ENCODE measurements at regions of chr2 and their contacts with region 1.

Region 1: GRCh38 chr2:239193925-239194677 is 206.7 kb downstream of the HDAC4 start:
- DNase-seq: peak; percentile 42
- ATAC-seq: peak; percentile 55; the same call in 1 of the 2 replicates
- H3K4me3 Mint-ChIP-seq: no peak overlapping the region
- H3K27ac Mint-ChIP-seq: no peak overlapping the region
- H3K4me1 Mint-ChIP-seq: no peaks in the 10 kb centered on the region
- H3K27me3 Mint-ChIP-seq: no peaks in the 10 kb centered on the region
- CTCF ChIP-seq: no peak

Region 2: GRCh38 chr2:239143858-239144718 is 50.0 kb before region 1 on chr2:
- CTCF ChIA-PET with region 1: interaction called, 14 read pairs
- POLR2A ChIA-PET with region 1: no interaction called
- DNase-seq: peak; percentile 53
- ATAC-seq: peak; percentile 87
- H3K4me3 Mint-ChIP-seq: no peak overlapping the region
- H3K27ac Mint-ChIP-seq: no peak overlapping the region
- H3K4me1 Mint-ChIP-seq: no peaks in the 10 kb centered on the region
- H3K27me3 Mint-ChIP-seq: no peaks in the 10 kb centered on the region
- CTCF ChIP-seq: peak; percentile 55

Region 3: DNA sequence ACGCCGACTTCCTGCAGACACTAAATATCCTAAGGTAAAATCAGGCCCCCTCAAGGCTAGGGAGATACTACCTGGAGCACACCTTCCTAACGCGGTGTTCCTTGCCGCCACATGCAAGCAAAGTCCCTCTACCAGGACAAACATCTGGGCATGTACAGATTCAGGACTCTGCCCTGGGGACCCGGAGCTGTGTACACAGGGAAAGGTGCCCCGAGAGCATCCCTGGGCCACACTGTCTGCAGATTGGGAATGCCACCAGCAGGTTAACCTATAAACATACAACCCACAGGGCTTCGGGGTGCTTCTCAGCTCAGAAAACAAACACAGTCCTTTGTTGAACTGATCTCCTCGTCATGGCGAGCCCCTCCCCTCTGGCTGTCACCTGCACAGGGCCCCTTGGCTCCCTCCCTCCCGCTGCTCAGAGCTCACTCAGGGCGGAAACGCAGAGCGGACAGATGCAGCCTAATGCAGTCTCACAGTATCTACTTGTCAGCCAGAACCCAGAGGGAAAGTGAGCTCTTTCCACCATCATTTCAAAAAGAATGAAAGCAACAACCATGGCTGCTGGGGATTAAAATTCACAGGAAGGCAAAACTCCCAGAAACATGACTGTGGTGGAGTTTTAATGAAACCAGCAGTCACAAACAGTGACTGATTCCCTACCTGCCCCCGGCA is 12.1 kb before region 1 on chr2:
- CTCF ChIA-PET with region 1: interaction called, 14 read pairs
- POLR2A ChIA-PET with region 1: no interaction called
- DNase-seq: no peak
- ATAC-seq: peak; percentile 60
- H3K4me3 Mint-ChIP-seq: no peak overlapping the region
- H3K27ac Mint-ChIP-seq: no peak overlapping the region
- H3K4me1 Mint-ChIP-seq: peaks cover 10% of the 10 kb centered on the region; the same call in 1 of the 2 replicates
- H3K27me3 Mint-ChIP-seq: no peaks in the 10 kb centered on the region
- CTCF ChIP-seq: no peak

Region 4: GRCh38 chr2:239208466-239209180 is 14.5 kb after region 1 on chr2:
- CTCF ChIA-PET with region 1: interaction called, 20 read pairs
- POLR2A ChIA-PET with region 1: no interaction called
- DNase-seq: no peak
- ATAC-seq: no peak
- H3K4me3 Mint-ChIP-seq: no peak overlapping the region
- H3K27ac Mint-ChIP-seq: peak overlapping the region; percentile 63; the same call in 1 of the 2 replicates
- H3K4me1 Mint-ChIP-seq: peaks cover 73% of the 10 kb centered on the region
- H3K27me3 Mint-ChIP-seq: no peaks in the 10 kb centered on the region
- CTCF ChIP-seq: no peak

Region 5: GRCh38 chr2:239412905-239413603 is 219.0 kb after region 1 on chr2:
- CTCF ChIA-PET with region 1: no interaction called
- POLR2A ChIA-PET with region 1: interaction called, 11 read pairs
- DNase-seq: no peak
- ATAC-seq: no peak
- H3K4me3 Mint-ChIP-seq: no peak overlapping the region
- H3K27ac Mint-ChIP-seq: no peak overlapping the region
- H3K4me1 Mint-ChIP-seq: no peaks in the 10 kb centered on the region
- H3K27me3 Mint-ChIP-seq: no peaks in the 10 kb centered on the region
- CTCF ChIP-seq: no peak